AG04449 (cell line): ENCODE measurements at regions of chr1 and their contacts with region 1.

Region 1: DNA sequence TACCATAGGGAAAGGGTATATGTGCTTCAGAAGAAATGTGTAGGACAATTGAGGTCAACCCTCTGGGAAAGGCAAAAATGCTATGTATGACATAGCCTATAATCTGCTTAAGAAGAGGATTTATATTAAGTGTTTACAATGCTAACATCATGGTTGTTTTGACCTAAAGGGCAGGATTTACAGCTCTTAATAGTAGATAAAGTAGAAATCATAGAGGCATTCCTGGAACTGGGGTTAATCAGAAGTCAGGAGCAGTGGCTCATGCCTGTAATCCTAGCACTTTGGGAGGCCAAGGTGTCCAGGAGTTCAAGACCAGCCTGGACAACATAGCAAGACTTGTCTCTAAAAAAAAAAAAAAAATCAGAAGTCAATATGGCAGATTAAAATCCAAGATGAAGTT is 8.7 kb upstream of the RPL11 start:
- DNase-seq: no peak
- H3K4me3 ChIP-seq: no peak overlapping the region
- CTCF ChIP-seq: no peak

Region 2: DNA sequence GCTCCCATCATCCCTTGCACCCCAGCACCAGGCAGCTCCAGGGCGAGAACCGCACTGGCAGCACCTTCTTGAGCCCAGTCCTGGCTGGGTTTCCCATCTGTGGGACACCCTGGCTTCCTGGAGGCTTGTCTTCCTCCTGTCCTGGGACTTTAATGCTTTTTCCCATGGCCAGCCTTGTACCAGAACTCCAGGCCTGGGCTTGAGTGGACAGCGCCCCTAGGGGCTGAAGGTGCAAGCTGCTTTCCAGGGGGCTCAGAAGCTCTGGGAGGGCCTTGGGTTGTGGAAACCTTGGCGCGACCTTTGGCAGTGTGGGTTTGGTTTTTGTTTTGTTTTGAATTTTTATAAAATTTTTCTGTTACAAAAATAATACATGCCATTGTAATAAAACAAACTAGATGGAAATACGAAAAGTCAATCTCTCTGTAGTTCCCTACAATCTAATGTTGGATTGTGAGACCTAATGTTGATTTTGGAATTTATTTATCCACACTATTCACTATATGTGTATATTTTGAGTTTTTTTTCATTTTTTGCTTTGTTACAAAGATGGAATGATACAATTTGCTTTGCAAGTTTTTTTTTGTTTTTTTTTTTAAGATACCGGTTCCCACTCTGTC is 25.2 kb before region 1 on chr1:
- CTCF ChIA-PET with region 1: interaction called, 10 read pairs
- POLR2A ChIA-PET with region 1: no interaction called
- DNase-seq: no peak
- H3K4me3 ChIP-seq: no peak overlapping the region
- CTCF ChIP-seq: peak; percentile 90

Region 3: DNA sequence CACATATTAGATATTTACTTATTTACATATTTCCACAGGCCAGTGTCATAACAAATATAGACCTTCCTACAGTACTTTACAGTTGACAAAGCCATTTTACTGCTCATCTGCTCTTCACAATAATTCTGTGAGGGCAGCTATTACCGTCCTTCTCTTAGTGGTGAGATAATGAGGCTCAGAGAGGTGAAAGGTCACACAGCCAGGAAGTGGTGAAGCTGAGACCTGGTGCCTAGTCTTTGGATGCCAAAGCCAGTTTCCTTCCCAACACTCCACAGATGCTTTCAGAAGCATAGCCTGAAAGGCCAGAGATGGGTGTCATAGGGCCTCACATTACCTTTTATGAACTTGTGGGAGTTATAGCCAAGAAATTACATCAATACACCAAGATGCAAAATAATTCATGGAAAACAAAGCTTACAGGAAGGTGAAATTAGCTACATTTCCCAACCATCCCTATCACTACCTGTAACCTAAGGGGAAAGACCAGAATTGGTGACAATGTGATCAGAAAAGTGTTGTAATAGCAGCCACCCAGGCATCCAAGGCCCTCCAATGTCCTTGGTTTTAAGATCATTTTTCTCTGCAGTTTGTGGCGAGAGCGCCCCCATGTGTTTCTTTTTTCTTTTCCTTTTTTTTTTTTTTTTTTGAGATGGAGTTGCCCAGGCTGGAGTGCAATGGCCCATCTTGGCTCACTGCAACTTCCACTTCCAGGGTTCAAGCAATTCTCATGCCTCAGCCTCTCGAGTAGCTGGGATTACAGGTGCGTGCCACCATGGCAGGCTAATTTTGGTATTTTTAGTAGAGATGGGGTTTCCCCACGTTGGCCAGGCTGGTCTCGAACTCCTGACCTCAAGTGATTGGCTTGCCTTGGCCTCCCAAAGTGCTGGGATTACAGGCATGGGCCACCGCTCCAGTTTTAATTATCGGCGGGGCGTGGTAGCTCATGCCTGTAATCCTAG is 17.8 kb before region 1 on chr1:
- CTCF ChIA-PET with region 1: interaction called, 14 read pairs
- POLR2A ChIA-PET with region 1: no interaction called
- DNase-seq: no peak
- H3K4me3 ChIP-seq: no peak overlapping the region
- CTCF ChIP-seq: peak; percentile 1